Activated CD4-positive, alpha-beta memory T cell treated with anti-CD3 and anti-CD28 coated beads for 36 hours (primary cell): ENCODE measurements at regions of chr1 and their contacts with region 1.

Region 1: GRCh38 chr1:89198491-89199072 is at the start of gene GBP4:
- DNase-seq: peak; percentile 60
- H3K4me3 Mint-ChIP-seq: peak within 1 kb of the TSS; percentile 88
- H3K27ac Mint-ChIP-seq: peak within 1 kb of the TSS; percentile 90
- H3K4me1 Mint-ChIP-seq: peaks cover 80% of the 10 kb centered on the region
- H3K27me3 Mint-ChIP-seq: no peaks in the 10 kb centered on the region
- total RNA-seq, gene GBP4: 26.5 to 29.9 TPM

Region 2: GRCh38 chr1:88998716-88999115 is 199.9 kb before region 1 on chr1:
- CTCF ChIA-PET with region 1: interaction called, 12 read pairs
- POLR2A ChIA-PET with region 1: no interaction called
- intact Hi-C with region 1: no loop called
- DNase-seq: no peak
- H3K4me3 Mint-ChIP-seq: no peak overlapping the region
- H3K27ac Mint-ChIP-seq: no peak overlapping the region
- H3K4me1 Mint-ChIP-seq: peaks cover 27% of the 10 kb centered on the region
- H3K27me3 Mint-ChIP-seq: no peaks in the 10 kb centered on the region

Region 3: DNA sequence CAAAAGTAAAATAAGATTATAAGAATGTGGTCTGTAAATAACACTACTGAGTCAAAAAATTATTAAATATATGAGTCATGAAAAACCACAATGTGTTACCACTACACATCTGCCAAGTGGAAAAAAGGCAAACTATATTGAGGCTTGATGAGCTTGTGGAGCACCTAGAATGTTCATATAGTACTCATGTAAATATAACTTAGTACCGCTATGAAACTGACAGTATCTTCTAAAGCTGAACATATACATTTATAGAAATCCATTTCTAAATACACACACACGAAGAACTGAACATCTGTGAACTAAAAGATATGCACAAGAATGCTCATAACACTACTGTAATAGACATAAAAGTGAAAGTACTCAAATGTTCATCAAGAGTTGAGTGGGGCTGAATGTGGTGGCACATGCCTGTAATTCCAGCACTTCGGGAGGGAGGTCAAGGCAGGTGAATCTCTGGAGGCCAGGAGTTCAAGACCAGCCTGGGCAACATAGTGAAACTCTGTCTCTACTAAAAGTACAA is 157.4 kb before region 1 on chr1:
- CTCF ChIA-PET with region 1: no interaction called
- POLR2A ChIA-PET with region 1: interaction called, 5 read pairs
- intact Hi-C with region 1: loop called (anchors 5 kb)
- DNase-seq: peak; percentile 66
- H3K4me3 Mint-ChIP-seq: no peak overlapping the region
- H3K27ac Mint-ChIP-seq: peak overlapping the region; percentile 70
- H3K4me1 Mint-ChIP-seq: peaks cover 41% of the 10 kb centered on the region
- H3K27me3 Mint-ChIP-seq: peaks cover 13% of the 10 kb centered on the region

Region 4: GRCh38 chr1:89171067-89171438 is 27.5 kb before region 1 on chr1:
- CTCF ChIA-PET with region 1: no interaction called
- POLR2A ChIA-PET with region 1: no interaction called
- intact Hi-C with region 1: loop called (anchors 1 kb)
- DNase-seq: no peak
- H3K4me3 Mint-ChIP-seq: no peak overlapping the region
- H3K27ac Mint-ChIP-seq: peak overlapping the region; percentile 50
- H3K4me1 Mint-ChIP-seq: peaks cover 7% of the 10 kb centered on the region
- H3K27me3 Mint-ChIP-seq: no peaks in the 10 kb centered on the region

Region 5: DNA sequence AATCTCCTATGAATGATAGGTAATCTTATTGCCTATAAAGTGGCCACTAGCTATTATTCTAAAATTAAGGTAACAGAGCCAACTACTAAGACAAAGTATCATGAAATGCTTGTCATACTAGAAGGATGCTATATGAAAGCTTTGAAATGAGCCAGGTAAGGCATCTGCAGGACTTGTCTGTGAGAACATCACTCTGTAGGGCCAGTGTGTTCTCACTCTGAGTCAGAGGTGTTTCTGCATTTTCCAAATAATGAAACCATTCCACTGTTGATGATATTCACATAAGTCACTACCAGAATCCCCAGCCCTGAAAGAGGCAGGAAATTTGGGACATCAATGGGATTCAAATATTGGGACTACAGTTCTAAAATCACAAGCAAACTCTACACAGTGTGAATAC is 99.9 kb after region 1 on chr1:
- CTCF ChIA-PET with region 1: no interaction called
- POLR2A ChIA-PET with region 1: interaction called, 12 read pairs
- intact Hi-C with region 1: loop called (anchors 1 kb)
- DNase-seq: no peak
- H3K4me3 Mint-ChIP-seq: no peak overlapping the region
- H3K27ac Mint-ChIP-seq: no peak overlapping the region
- H3K4me1 Mint-ChIP-seq: peaks cover 63% of the 10 kb centered on the region
- H3K27me3 Mint-ChIP-seq: no peaks in the 10 kb centered on the region